GM12878 (cell line): ENCODE measurements at regions of chr18 and their contacts with region 1.

Region 1: GRCh38 chr18:58649966-58650816 is 21.1 kb upstream of the MALT1 start:
- DNase-seq: peak; percentile 80
- ATAC-seq: peak; percentile 81
- H3K4me3 ChIP-seq: 0 out of 2 replicates have a peak overlapping the region, but pooled peaks have one; percentile 12
- H3K27ac ChIP-seq: peak overlapping the region; percentile 80
- H3K4me1 ChIP-seq: peaks cover 24% of the 10 kb centered on the region
- H3K27me3 ChIP-seq: no peaks in the 10 kb centered on the region
- CTCF ChIP-seq: no peak
- EP300 ChIP-seq: peak; percentile 37 to 85; a peak in 3 of 4 replicates
- POLR2A ChIP-seq: no peak
- RAD21 ChIP-seq: 0 out of 2 replicates have a peak, but pooled peaks have one; percentile 1

Region 2: GRCh38 chr18:57035590-57035989 is 1614.6 kb before region 1 on chr18:
- CTCF ChIA-PET with region 1: no interaction called
- POLR2A ChIA-PET with region 1: no interaction called
- RAD21 ChIA-PET with region 1: no interaction called
- SMC1A ChIA-PET with region 1: no interaction called
- in situ Hi-C with region 1: no loop called
- intact Hi-C with region 1: no loop called
- DNase-seq: no peak
- ATAC-seq: no peak
- H3K4me3 ChIP-seq: no peak overlapping the region
- H3K27ac ChIP-seq: no peak overlapping the region
- H3K4me1 ChIP-seq: no peaks in the 10 kb centered on the region
- H3K27me3 ChIP-seq: no peaks in the 10 kb centered on the region; a peak in 1 of 4 replicates
- CTCF ChIP-seq: no peak
- EP300 ChIP-seq: no peak
- POLR2A ChIP-seq: no peak
- RAD21 ChIP-seq: no peak

Region 3: DNA sequence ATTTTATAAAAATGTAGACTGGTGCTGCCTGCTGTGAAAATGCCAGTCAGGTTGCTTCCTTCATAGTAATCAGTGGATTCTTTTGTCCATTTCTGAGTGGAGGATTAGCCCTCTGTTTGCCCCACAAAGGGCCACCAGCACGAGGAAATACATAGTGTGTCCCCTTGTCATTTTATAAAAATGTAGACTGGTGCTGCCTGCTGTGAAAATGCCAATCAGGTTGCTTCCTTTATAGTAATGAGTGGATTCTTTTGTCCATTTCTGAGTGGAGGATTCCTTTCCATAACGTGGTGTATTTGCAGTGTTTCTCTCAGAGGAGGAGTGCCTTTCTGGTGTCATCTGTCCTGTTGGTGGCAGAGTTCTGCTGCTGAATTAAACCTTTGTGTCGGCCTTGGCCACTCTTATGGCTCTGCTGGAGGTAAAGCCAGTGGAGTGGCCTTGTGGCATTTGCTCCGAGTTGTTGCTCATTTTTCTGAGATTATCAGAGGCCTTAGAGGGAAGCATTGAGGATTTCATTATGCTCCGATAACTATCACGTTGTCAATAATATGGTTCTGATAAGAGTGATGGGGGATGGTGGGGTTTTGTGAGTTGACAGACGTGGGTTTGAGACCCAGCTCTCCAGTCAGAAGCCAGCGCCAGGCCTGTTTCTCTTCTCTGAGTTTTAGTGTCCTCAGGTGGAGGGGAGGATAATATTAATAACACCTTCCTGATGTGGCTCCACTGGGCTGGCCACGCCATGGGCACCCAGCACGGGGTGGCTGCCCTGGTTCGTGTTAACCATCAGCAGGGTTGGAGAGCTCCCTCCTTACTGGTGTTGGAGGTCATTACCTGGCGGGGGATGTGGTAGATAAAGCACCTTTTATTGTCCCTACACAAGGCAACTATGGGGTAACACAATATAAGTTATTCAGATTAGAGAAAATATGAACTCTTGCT is 509.5 kb before region 1 on chr18:
- CTCF ChIA-PET with region 1: no interaction called
- POLR2A ChIA-PET with region 1: no interaction called
- RAD21 ChIA-PET with region 1: no interaction called
- SMC1A ChIA-PET with region 1: no interaction called
- in situ Hi-C with region 1: no loop called
- intact Hi-C with region 1: no loop called
- DNase-seq: no peak
- ATAC-seq: no peak
- H3K4me3 ChIP-seq: no peak overlapping the region
- H3K27ac ChIP-seq: no peak overlapping the region
- H3K4me1 ChIP-seq: no peaks in the 10 kb centered on the region
- H3K27me3 ChIP-seq: no peaks in the 10 kb centered on the region
- CTCF ChIP-seq: 0 out of 6 replicates have a peak, but pooled peaks of 1 of the 3 experiments have one; percentile 8
- EP300 ChIP-seq: no peak
- POLR2A ChIP-seq: no peak
- RAD21 ChIP-seq: peak; percentile 16; the same call in 1 of the 2 replicates

Region 4: DNA sequence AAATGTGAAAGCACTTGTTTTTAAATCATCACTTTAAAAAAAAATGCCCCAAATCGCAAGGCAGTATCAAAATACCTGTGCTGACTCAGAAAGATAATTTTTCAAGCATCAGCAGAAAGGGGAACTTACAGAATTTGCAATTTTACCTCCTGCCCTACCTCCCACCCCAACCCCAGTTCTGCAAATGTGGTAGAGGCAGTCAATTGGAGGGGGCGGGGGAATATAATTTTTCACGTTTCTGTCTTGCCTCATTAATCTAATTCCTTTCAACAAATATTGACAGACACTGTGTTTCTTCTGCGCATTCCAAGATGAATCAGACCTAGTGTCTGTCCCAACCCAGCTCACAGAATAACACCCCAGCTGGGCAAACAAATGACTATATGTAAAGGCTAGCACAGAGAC is 98.1 kb before region 1 on chr18:
- CTCF ChIA-PET with region 1: no interaction called
- POLR2A ChIA-PET with region 1: no interaction called
- RAD21 ChIA-PET with region 1: interaction called, 7 read pairs
- SMC1A ChIA-PET with region 1: interaction called, 682 read pairs
- in situ Hi-C with region 1: no loop called
- intact Hi-C with region 1: no loop called
- DNase-seq: peak; percentile 82
- ATAC-seq: peak; percentile 78
- H3K4me3 ChIP-seq: no peak overlapping the region
- H3K27ac ChIP-seq: peak overlapping the region; percentile 80
- H3K4me1 ChIP-seq: peaks cover 37% of the 10 kb centered on the region
- H3K27me3 ChIP-seq: no peaks in the 10 kb centered on the region
- CTCF ChIP-seq: no peak
- EP300 ChIP-seq: peak; percentile 97
- POLR2A ChIP-seq: no peak
- RAD21 ChIP-seq: peak; percentile 25; the same call in 1 of the 2 replicates

Region 5: DNA sequence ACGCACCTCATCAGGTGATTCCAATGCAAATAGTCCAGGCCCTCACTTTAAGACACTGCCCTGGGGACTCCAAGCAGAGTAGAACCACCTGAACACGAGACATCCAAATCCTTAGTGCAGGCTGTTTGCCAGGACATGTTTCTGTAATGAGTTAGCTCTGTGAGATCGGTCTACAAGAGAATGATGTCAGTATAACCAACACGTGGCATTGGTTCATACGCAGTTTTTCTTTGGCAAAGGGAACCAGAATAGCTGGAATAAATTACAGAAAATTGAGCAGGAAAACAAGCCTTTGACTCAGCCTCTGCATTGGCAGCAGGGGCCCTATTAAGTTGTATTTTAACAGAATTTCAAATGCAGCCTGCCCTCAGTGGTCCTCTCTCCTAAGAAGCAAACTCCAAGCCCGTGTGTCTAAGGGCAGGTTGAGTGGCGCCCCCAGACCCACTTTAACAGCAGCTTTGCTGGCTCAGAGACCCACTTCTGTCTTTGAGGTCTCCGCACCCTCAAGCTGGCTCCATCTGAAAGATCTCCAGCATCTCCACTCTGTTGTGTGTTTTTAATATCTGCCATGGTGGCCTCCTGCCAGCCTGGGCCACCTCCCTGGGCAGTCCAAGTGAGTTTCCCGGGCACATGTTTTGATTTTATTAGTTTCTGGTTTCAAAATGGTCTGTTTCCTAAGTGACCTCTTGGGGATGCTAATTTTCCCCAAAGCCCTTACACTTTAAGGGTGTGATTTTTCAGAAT is 82.6 kb before region 1 on chr18:
- CTCF ChIA-PET with region 1: interaction called, 8 read pairs
- POLR2A ChIA-PET with region 1: interaction called, 7 read pairs
- RAD21 ChIA-PET with region 1: interaction called, 10 read pairs
- SMC1A ChIA-PET with region 1: interaction called, 34 read pairs
- in situ Hi-C with region 1: no loop called
- intact Hi-C with region 1: no loop called
- DNase-seq: no peak
- ATAC-seq: no peak
- H3K4me3 ChIP-seq: no peak overlapping the region
- H3K27ac ChIP-seq: no peak overlapping the region
- H3K4me1 ChIP-seq: peaks cover 28% of the 10 kb centered on the region
- H3K27me3 ChIP-seq: no peaks in the 10 kb centered on the region
- CTCF ChIP-seq: no peak
- EP300 ChIP-seq: no peak
- POLR2A ChIP-seq: no peak
- RAD21 ChIP-seq: no peak

Region 6: DNA sequence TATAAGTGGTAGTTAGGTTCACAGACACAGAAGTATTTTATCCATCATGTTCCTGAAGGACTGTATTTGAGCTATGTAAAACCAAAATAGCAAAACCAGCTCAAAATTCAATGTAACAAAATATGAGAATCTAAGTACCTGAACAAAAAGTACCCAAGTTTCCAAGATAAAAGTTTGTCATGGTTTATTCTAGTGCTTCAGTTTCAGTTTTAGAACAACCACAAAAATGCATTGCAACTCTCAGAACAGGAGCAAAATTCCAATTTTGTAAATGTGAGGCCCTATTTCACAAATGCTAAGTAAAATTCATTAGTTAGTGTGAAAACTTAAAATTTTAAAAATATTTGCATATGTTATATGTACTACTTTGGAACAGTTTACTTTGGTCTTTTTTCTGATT is 16.3 kb before region 1 on chr18:
- CTCF ChIA-PET with region 1: interaction called, 6 read pairs
- POLR2A ChIA-PET with region 1: interaction called, 11 read pairs
- RAD21 ChIA-PET with region 1: interaction called, 4 read pairs
- SMC1A ChIA-PET with region 1: interaction called, 14 read pairs
- in situ Hi-C with region 1: no loop called
- intact Hi-C with region 1: loop called (anchors 1 kb)
- DNase-seq: peak; percentile 40
- ATAC-seq: peak; percentile 53
- H3K4me3 ChIP-seq: no peak overlapping the region
- H3K27ac ChIP-seq: peak overlapping the region; percentile 86
- H3K4me1 ChIP-seq: peaks cover 47% of the 10 kb centered on the region
- H3K27me3 ChIP-seq: no peaks in the 10 kb centered on the region
- CTCF ChIP-seq: no peak
- EP300 ChIP-seq: no peak; a peak in 1 of 4 replicates
- POLR2A ChIP-seq: no peak
- RAD21 ChIP-seq: no peak

Region 7: GRCh38 chr18:58639751-58640427 is 10.3 kb before region 1 on chr18:
- CTCF ChIA-PET with region 1: interaction called, 6 read pairs
- POLR2A ChIA-PET with region 1: interaction called, 11 read pairs
- RAD21 ChIA-PET with region 1: interaction called, 4 read pairs
- SMC1A ChIA-PET with region 1: interaction called, 14 read pairs
- in situ Hi-C with region 1: no loop called
- intact Hi-C with region 1: no loop called
- DNase-seq: no peak
- ATAC-seq: peak; percentile 69
- H3K4me3 ChIP-seq: no peak overlapping the region
- H3K27ac ChIP-seq: no peak overlapping the region; the same call in 1 of the 2 replicates
- H3K4me1 ChIP-seq: peaks cover 42% of the 10 kb centered on the region
- H3K27me3 ChIP-seq: no peaks in the 10 kb centered on the region
- CTCF ChIP-seq: no peak
- EP300 ChIP-seq: no peak
- POLR2A ChIP-seq: no peak
- RAD21 ChIP-seq: no peak

Region 8: GRCh38 chr18:58661423-58661822 is 11.2 kb after region 1 on chr18:
- CTCF ChIA-PET with region 1: interaction called, 6 read pairs
- POLR2A ChIA-PET with region 1: interaction called, 4 read pairs
- RAD21 ChIA-PET with region 1: interaction called, 6 read pairs
- SMC1A ChIA-PET with region 1: interaction called, 12 read pairs
- in situ Hi-C with region 1: no loop called
- intact Hi-C with region 1: no loop called
- DNase-seq: no peak
- ATAC-seq: no peak
- H3K4me3 ChIP-seq: peak overlapping the region; percentile 28; the same call in 1 of the 2 replicates
- H3K27ac ChIP-seq: peak overlapping the region; percentile 45; the same call in 1 of the 2 replicates
- H3K4me1 ChIP-seq: peaks cover 36% of the 10 kb centered on the region
- H3K27me3 ChIP-seq: no peaks in the 10 kb centered on the region
- CTCF ChIP-seq: peak; percentile 4 to 36 (median 20); a peak in 4 of 6 replicates
- EP300 ChIP-seq: no peak
- POLR2A ChIP-seq: no peak
- RAD21 ChIP-seq: peak; percentile 25; the same call in 1 of the 2 replicates

Region 9: GRCh38 chr18:58671111-58671631 is 21.0 kb after region 1 on chr18 and contains the start of gene MALT1:
- CTCF ChIA-PET with region 1: interaction called, 8 read pairs
- POLR2A ChIA-PET with region 1: interaction called, 15 read pairs
- RAD21 ChIA-PET with region 1: interaction called, 15 read pairs
- SMC1A ChIA-PET with region 1: interaction called, 37 read pairs
- in situ Hi-C with region 1: no loop called
- intact Hi-C with region 1: no loop called
- DNase-seq: peak; percentile 75
- ATAC-seq: peak; percentile 78
- H3K4me3 ChIP-seq: peak within 1 kb of the TSS; percentile 95
- H3K27ac ChIP-seq: peak within 1 kb of the TSS; percentile 93
- H3K4me1 ChIP-seq: peaks cover 16% of the 10 kb centered on the region; the same call in 1 of the 2 replicates
- H3K27me3 ChIP-seq: no peaks in the 10 kb centered on the region
- CTCF ChIP-seq: no peak
- EP300 ChIP-seq: peak in 1 of 2 experiments; percentile 17; a peak in 1 of 4 replicates
- POLR2A ChIP-seq: peak; percentile 96
- RAD21 ChIP-seq: no peak; the same call in 1 of the 2 replicates
- polyA plus RNA-seq, gene MALT1: 17.6 to 32.5 TPM